Panc1 (cell line): ENCODE measurements at regions of chr5 and their contacts with region 1.

Region 1: GRCh38 chr5:133111299-133111698 is 59.5 kb downstream of the HSPA4 start:
- DNase-seq: peak; percentile 82
- ATAC-seq: peak; percentile 87
- H3K4me3 ChIP-seq: no peak overlapping the region
- H3K27ac ChIP-seq: no peak overlapping the region
- H3K4me1 ChIP-seq: peaks cover 9% of the 10 kb centered on the region
- H3K27me3 ChIP-seq: no peaks in the 10 kb centered on the region
- CTCF ChIP-seq: peak; percentile 90

Region 2: GRCh38 chr5:133247881-133248624 is 136.8 kb after region 1 on chr5:
- CTCF ChIA-PET with region 1: interaction called, 5 read pairs
- POLR2A ChIA-PET with region 1: interaction called, 3 read pairs
- in situ Hi-C with region 1: no loop called
- intact Hi-C with region 1: loop called (anchors 2 kb)
- DNase-seq: no peak
- ATAC-seq: peak; percentile 67
- H3K4me3 ChIP-seq: no peak overlapping the region
- H3K27ac ChIP-seq: no peak overlapping the region
- H3K4me1 ChIP-seq: peaks cover 29% of the 10 kb centered on the region
- H3K27me3 ChIP-seq: no peaks in the 10 kb centered on the region
- CTCF ChIP-seq: peak; percentile 89

Region 3: GRCh38 chr5:133287500-133287899 is 176.2 kb after region 1 on chr5:
- CTCF ChIA-PET with region 1: interaction called, 3 read pairs
- POLR2A ChIA-PET with region 1: no interaction called
- in situ Hi-C with region 1: no loop called
- intact Hi-C with region 1: loop called (anchors 1 kb)
- DNase-seq: peak; percentile 28
- ATAC-seq: peak; percentile 82
- H3K4me3 ChIP-seq: no peak overlapping the region
- H3K27ac ChIP-seq: no peak overlapping the region
- H3K4me1 ChIP-seq: no peaks in the 10 kb centered on the region
- H3K27me3 ChIP-seq: no peaks in the 10 kb centered on the region
- CTCF ChIP-seq: no peak; the same call in 1 of the 2 replicates

Region 4: GRCh38 chr5:133370036-133370831 is 258.9 kb after region 1 on chr5:
- CTCF ChIA-PET with region 1: no interaction called
- POLR2A ChIA-PET with region 1: no interaction called
- in situ Hi-C with region 1: no loop called
- intact Hi-C with region 1: no loop called
- DNase-seq: no peak
- ATAC-seq: no peak
- H3K4me3 ChIP-seq: no peak overlapping the region
- H3K27ac ChIP-seq: no peak overlapping the region
- H3K4me1 ChIP-seq: no peaks in the 10 kb centered on the region
- H3K27me3 ChIP-seq: peaks cover 3% of the 10 kb centered on the region; the same call in 1 of the 2 replicates
- CTCF ChIP-seq: no peak

Region 5: GRCh38 chr5:133460172-133460758 is 349.0 kb after region 1 on chr5:
- CTCF ChIA-PET with region 1: no interaction called
- POLR2A ChIA-PET with region 1: no interaction called
- in situ Hi-C with region 1: no loop called
- intact Hi-C with region 1: loop called (anchors 5 kb)
- DNase-seq: peak; percentile 18
- ATAC-seq: peak; percentile 65
- H3K4me3 ChIP-seq: no peak overlapping the region
- H3K27ac ChIP-seq: no peak overlapping the region
- H3K4me1 ChIP-seq: no peaks in the 10 kb centered on the region
- H3K27me3 ChIP-seq: no peaks in the 10 kb centered on the region
- CTCF ChIP-seq: peak; percentile 85

Region 6: GRCh38 chr5:133546500-133546899 is 435.2 kb after region 1 on chr5:
- CTCF ChIA-PET with region 1: no interaction called
- POLR2A ChIA-PET with region 1: no interaction called
- in situ Hi-C with region 1: no loop called
- intact Hi-C with region 1: no loop called
- DNase-seq: no peak
- ATAC-seq: no peak
- H3K4me3 ChIP-seq: no peak overlapping the region
- H3K27ac ChIP-seq: no peak overlapping the region
- H3K4me1 ChIP-seq: no peaks in the 10 kb centered on the region
- H3K27me3 ChIP-seq: peaks cover 11% of the 10 kb centered on the region
- CTCF ChIP-seq: no peak

Region 7: GRCh38 chr5:133599600-133599999 is 488.3 kb after region 1 on chr5:
- CTCF ChIA-PET with region 1: no interaction called
- POLR2A ChIA-PET with region 1: no interaction called
- in situ Hi-C with region 1: no loop called
- intact Hi-C with region 1: no loop called
- DNase-seq: no peak
- ATAC-seq: no peak
- H3K4me3 ChIP-seq: no peak overlapping the region
- H3K27ac ChIP-seq: no peak overlapping the region
- H3K4me1 ChIP-seq: no peaks in the 10 kb centered on the region
- H3K27me3 ChIP-seq: peaks cover 20% of the 10 kb centered on the region
- CTCF ChIP-seq: no peak

Region 8: GRCh38 chr5:133610489-133611356 is 499.4 kb after region 1 on chr5:
- CTCF ChIA-PET with region 1: no interaction called
- POLR2A ChIA-PET with region 1: no interaction called
- in situ Hi-C with region 1: no loop called
- intact Hi-C with region 1: loop called (anchors 5 kb)
- DNase-seq: no peak
- ATAC-seq: peak; percentile 94
- H3K4me3 ChIP-seq: peak overlapping the region; percentile 20 to 40; a peak in 3 of 4 replicates
- H3K27ac ChIP-seq: no peak overlapping the region
- H3K4me1 ChIP-seq: peaks cover 8% of the 10 kb centered on the region
- H3K27me3 ChIP-seq: peaks cover 53% of the 10 kb centered on the region
- CTCF ChIP-seq: peak; percentile 85